ENCODE measurements at regions of chr14 and their contacts with region 1.

Region 1: GRCh38 chr14:89641495-89642175 is 224.6 kb upstream of the FOXN3 start:
- DNase-seq: peak; percentile 59
- ATAC-seq: peak; percentile 91
- H3K4me3 Mint-ChIP-seq: peak overlapping the region; percentile 60
- H3K27ac Mint-ChIP-seq: peak overlapping the region; percentile 96
- H3K4me1 Mint-ChIP-seq: peaks cover 68% of the 10 kb centered on the region
- H3K27me3 Mint-ChIP-seq: no peaks in the 10 kb centered on the region
- CTCF ChIP-seq: no peak

Region 2: DNA sequence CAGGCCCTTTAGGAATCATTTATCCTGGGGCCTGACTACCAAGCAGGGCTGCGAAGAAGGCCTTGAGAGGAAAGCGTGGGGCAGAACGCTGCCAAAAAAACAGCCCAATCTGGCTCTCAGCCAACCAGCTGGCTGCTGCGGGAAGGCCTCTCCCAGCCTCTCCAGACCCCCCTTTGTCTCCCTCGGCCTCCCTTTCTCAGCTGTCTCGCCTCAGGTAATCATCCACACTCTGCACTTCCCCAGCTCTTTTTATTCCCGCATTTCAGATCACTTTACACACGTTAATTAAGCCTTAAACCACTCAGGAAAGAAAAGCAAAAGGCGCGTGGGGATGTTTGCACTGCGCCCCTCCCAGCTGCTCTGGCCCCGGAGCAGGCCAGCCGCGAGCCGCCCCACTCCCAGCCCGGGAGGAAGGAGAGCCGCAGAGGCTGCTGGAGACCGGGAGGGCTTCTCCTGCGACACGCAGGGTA is 16.4 kb before region 1 on chr14:
- CTCF ChIA-PET with region 1: interaction called, 9 read pairs
- POLR2A ChIA-PET with region 1: interaction called, 44 read pairs
- intact Hi-C with region 1: no loop called
- DNase-seq: no peak
- ATAC-seq: no peak
- H3K4me3 Mint-ChIP-seq: no peak overlapping the region
- H3K27ac Mint-ChIP-seq: peak overlapping the region; percentile 66
- H3K4me1 Mint-ChIP-seq: peaks cover 80% of the 10 kb centered on the region
- H3K27me3 Mint-ChIP-seq: no peaks in the 10 kb centered on the region
- CTCF ChIP-seq: no peak

Region 3: DNA sequence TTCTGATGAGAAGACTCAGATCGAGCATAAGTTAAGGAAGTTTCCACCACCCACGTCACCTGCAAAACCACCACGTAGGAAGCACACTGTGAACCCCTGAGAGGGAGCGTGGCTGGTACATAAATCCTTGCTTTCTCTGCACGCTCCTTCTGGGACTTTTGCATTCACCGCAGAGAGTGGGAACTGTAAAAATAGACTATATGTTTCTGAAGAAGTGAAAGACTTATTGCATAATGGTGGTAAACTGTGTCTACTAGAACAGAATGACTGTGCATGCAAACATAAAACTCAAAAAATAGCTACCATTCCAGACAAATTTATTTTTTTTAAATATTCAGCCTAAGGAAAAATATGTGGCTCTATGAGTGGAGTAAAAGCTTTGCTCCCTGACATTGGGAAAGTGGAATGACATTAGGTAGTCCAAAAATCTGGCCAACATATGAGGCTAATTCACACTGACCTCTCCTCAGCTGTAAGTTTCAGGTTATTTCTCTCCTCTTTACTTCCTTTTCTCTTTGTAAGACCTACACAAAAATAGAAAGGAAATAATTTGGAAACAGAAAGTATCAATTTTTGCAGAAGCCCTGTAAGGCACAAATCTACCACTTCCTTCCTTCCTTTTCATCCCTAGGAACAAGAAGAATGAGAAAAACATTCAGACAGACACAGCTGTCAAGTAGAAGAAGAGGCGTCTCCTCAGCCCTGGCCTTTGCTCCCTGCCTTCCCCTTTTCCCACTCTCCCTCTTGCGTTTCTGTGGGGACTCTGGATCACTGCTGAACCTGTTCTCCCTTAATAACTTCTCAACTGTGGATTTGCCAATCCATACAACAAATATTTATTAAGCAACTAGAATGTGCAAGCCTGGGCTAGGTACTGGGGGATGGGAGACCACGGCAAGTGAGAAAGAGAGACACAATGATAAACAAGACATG is 39.7 kb after region 1 on chr14:
- CTCF ChIA-PET with region 1: interaction called, 5 read pairs
- POLR2A ChIA-PET with region 1: interaction called, 7 read pairs
- intact Hi-C with region 1: loop called (anchors 5 kb)
- DNase-seq: peak; percentile 83
- ATAC-seq: peak; percentile 79
- H3K4me3 Mint-ChIP-seq: peak overlapping the region; percentile 63
- H3K27ac Mint-ChIP-seq: peak overlapping the region; percentile 90
- H3K4me1 Mint-ChIP-seq: peaks cover 46% of the 10 kb centered on the region
- H3K27me3 Mint-ChIP-seq: no peaks in the 10 kb centered on the region
- CTCF ChIP-seq: no peak

Region 4: GRCh38 chr14:89792489-89793366 is 151.1 kb after region 1 on chr14:
- CTCF ChIA-PET with region 1: no interaction called
- POLR2A ChIA-PET with region 1: no interaction called
- intact Hi-C with region 1: no loop called
- DNase-seq: no peak
- ATAC-seq: no peak
- H3K4me3 Mint-ChIP-seq: no peak overlapping the region
- H3K27ac Mint-ChIP-seq: no peak overlapping the region
- H3K4me1 Mint-ChIP-seq: no peaks in the 10 kb centered on the region
- H3K27me3 Mint-ChIP-seq: no peaks in the 10 kb centered on the region
- CTCF ChIP-seq: no peak

Region 5: DNA sequence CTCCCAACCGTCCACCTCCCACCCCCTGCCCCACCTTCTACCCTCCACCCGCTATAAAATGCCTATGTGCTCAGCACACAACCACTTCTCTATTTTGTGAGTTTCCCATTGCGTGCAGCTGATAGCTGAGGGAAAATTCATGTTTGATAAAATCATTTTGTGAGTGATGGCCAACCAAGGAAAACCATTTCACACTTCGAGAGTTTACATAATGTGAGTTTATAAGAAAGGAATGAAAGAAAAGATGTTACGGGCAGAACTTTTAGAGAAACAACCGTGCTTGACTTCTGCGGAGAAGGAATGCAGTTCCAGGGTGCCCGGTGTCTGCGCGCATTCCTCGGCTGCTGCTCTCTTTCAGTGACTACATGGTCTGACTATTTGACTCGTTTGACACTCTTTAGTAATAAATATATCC is 172.0 kb after region 1 on chr14:
- CTCF ChIA-PET with region 1: no interaction called
- POLR2A ChIA-PET with region 1: no interaction called
- intact Hi-C with region 1: no loop called
- DNase-seq: no peak
- ATAC-seq: no peak
- H3K4me3 Mint-ChIP-seq: no peak overlapping the region
- H3K27ac Mint-ChIP-seq: no peak overlapping the region
- H3K4me1 Mint-ChIP-seq: no peaks in the 10 kb centered on the region
- H3K27me3 Mint-ChIP-seq: peaks cover 6% of the 10 kb centered on the region
- CTCF ChIP-seq: no peak